ENCODE measurements at regions of chr10 and their contacts with region 1.

Region 1: GRCh38 chr10:6401562-6402348 is 178.3 kb downstream of the PRKCQ start:
- DNase-seq: peak; percentile 74
- ATAC-seq: peak; percentile 95
- H3K4me3 Mint-ChIP-seq: peak overlapping the region; percentile 42
- H3K27ac Mint-ChIP-seq: peak overlapping the region; percentile 38; the same call in 1 of the 2 replicates
- H3K4me1 Mint-ChIP-seq: peaks cover 28% of the 10 kb centered on the region
- H3K27me3 Mint-ChIP-seq: no peaks in the 10 kb centered on the region; the same call in 1 of the 2 replicates
- CTCF ChIP-seq: peak; percentile 62

Region 2: DNA sequence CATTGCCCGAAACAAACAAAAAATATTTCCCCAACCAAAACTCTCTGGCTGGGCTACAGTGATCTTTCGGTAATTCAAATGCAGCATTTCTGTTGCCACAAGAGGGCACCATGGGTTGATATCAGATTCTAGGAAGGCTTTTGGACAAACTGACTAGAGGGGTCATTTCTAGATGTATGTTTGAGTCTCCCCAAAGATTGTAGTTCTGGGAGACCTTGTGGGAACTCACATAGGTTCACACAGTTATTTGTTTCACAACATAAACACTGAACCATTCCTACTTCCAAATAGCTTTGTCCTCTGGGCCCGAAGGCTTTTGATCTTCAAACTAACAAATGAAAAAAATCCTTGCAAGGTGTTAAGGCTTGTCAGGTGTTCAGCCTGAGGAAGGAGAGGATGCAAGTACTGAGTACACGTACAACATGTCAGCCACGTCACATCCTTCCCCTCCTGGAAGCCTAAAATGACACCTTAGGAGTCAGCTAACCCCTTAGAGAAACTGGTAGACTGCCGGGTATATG is 387.5 kb before region 1 on chr10:
- CTCF ChIA-PET with region 1: interaction called, 11 read pairs
- POLR2A ChIA-PET with region 1: no interaction called
- DNase-seq: peak; percentile 55
- ATAC-seq: peak; percentile 85
- H3K4me3 Mint-ChIP-seq: no peak overlapping the region
- H3K27ac Mint-ChIP-seq: no peak overlapping the region
- H3K4me1 Mint-ChIP-seq: peaks cover 7% of the 10 kb centered on the region
- H3K27me3 Mint-ChIP-seq: no peaks in the 10 kb centered on the region
- CTCF ChIP-seq: peak; percentile 35; the same call in 1 of the 2 replicates

Region 3: GRCh38 chr10:6108603-6109443 is 292.9 kb before region 1 on chr10:
- CTCF ChIA-PET with region 1: interaction called, 14 read pairs
- POLR2A ChIA-PET with region 1: no interaction called
- DNase-seq: peak; percentile 84
- ATAC-seq: peak; percentile 97
- H3K4me3 Mint-ChIP-seq: peak overlapping the region; percentile 43
- H3K27ac Mint-ChIP-seq: peak overlapping the region; percentile 97
- H3K4me1 Mint-ChIP-seq: peaks cover 43% of the 10 kb centered on the region
- H3K27me3 Mint-ChIP-seq: no peaks in the 10 kb centered on the region
- CTCF ChIP-seq: peak; percentile 70

Region 4: GRCh38 chr10:6151087-6151977 is 250.4 kb before region 1 on chr10:
- CTCF ChIA-PET with region 1: interaction called, 21 read pairs
- POLR2A ChIA-PET with region 1: interaction called, 3 read pairs
- DNase-seq: peak; percentile 75
- ATAC-seq: peak; percentile 95
- H3K4me3 Mint-ChIP-seq: no peak overlapping the region
- H3K27ac Mint-ChIP-seq: 0 out of 2 replicates have a peak overlapping the region, but pooled peaks have one; percentile 81
- H3K4me1 Mint-ChIP-seq: peaks cover 33% of the 10 kb centered on the region
- H3K27me3 Mint-ChIP-seq: no peaks in the 10 kb centered on the region
- CTCF ChIP-seq: peak; percentile 31; the same call in 1 of the 2 replicates

Region 5: GRCh38 chr10:6202684-6203330 is 198.9 kb before region 1 on chr10 and contains the start of gene PFKFB3:
- CTCF ChIA-PET with region 1: interaction called, 160 read pairs
- POLR2A ChIA-PET with region 1: interaction called, 33 read pairs
- DNase-seq: peak; percentile 97
- ATAC-seq: peak; percentile 80
- H3K4me3 Mint-ChIP-seq: peak within 1 kb of the TSS; percentile 97
- H3K27ac Mint-ChIP-seq: peak within 1 kb of the TSS; percentile 94
- H3K4me1 Mint-ChIP-seq: peaks cover 21% of the 10 kb centered on the region
- H3K27me3 Mint-ChIP-seq: peaks cover 53% of the 10 kb centered on the region
- CTCF ChIP-seq: peak; percentile 94
- total RNA-seq, gene PFKFB3: 30.6 to 42.5 TPM (median 40.7 TPM) in 3 replicates

Region 6: GRCh38 chr10:6236361-6237198 is 165.2 kb before region 1 on chr10:
- CTCF ChIA-PET with region 1: interaction called, 20 read pairs
- POLR2A ChIA-PET with region 1: no interaction called
- DNase-seq: no peak
- ATAC-seq: no peak
- H3K4me3 Mint-ChIP-seq: no peak overlapping the region
- H3K27ac Mint-ChIP-seq: peak overlapping the region; percentile 65
- H3K4me1 Mint-ChIP-seq: no peaks in the 10 kb centered on the region
- H3K27me3 Mint-ChIP-seq: no peaks in the 10 kb centered on the region
- CTCF ChIP-seq: no peak

Region 7: DNA sequence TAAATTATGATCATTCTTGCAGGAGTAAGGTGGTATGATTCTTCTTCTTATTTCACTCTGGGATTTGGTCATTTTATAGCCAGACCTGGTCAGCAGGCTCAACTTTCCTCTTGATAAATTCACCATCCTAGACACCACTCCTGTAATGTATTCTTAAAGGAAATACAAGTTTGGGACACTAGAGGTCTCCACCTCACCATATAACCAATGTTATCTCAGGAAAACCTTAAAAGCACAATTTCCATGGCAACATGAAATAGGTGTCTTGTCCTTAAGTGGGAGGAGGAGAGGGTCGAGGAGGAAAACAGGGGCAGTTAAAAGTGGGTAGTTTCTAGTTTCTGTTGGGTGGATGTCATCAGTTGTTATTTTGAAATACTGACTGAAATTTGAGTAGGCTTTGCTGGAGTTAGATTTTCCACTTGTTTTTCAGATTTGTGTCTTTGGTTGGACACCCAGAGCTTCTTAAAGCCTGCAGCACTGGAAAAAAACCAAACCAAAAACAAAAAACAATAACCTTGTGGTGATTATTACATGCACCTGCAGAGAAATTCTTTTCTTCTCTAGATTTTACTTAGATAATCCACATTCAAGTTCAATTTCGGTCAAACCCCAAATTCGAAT is 15.2 kb after region 1 on chr10:
- CTCF ChIA-PET with region 1: interaction called, 12 read pairs
- POLR2A ChIA-PET with region 1: no interaction called
- DNase-seq: no peak
- ATAC-seq: peak; percentile 81
- H3K4me3 Mint-ChIP-seq: no peak overlapping the region
- H3K27ac Mint-ChIP-seq: no peak overlapping the region
- H3K4me1 Mint-ChIP-seq: peaks cover 4% of the 10 kb centered on the region
- H3K27me3 Mint-ChIP-seq: no peaks in the 10 kb centered on the region
- CTCF ChIP-seq: peak; percentile 78

Measured in WTC11 (cell line).